HCT116 (cell line): ENCODE measurements at regions of chr12 and their contacts with region 1.

Region 1: DNA sequence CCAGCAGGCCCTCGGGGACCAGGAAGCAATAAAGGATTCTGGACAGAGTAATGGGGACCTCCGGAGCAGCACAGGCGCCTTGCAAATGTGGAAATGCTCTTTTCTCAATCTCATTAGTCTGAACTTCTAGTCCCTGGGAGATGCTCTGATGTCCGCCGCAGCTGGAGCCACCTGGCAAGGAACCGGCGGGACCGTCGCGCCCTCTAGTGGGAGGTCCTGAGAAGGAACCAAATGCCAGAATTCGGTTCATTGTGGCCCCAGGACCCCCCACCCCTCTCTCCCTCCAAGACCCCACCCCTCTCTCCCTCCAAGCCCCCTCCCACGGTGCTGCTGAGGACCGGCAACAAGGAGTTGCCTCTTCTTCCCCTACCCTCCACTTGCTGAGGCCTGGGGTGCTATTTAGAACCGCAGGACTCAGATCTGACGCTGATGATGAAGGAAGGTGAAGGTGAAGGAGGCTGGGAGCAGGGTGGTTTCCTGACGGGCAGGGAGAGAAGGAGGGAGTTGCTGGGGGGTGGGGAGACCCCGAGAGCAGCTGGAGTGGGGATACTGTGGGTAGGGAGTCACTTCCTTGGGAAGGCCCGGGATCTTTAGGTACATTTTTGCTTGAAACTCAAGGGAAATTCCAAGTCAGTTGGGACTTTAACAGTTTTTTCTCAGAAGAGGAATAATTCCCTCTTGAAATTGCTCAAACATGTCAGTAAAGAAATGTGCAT is 42.5 kb downstream of the SMIM41 start:
- DNase-seq: no peak
- ATAC-seq: peak; percentile 58
- H3K4me3 ChIP-seq: no peak overlapping the region
- H3K27ac ChIP-seq: no peak overlapping the region
- H3K4me1 ChIP-seq: peaks cover 0 to 18% of the 10 kb centered on the region in 2 experiments; a peak in 2 of 4 replicates
- H3K27me3 ChIP-seq: no peaks in the 10 kb centered on the region
- CTCF ChIP-seq: peak; percentile 70 to 83 (median 80)
- POLR2A ChIP-seq: no peak
- RAD21 ChIP-seq: peak; percentile 72

Region 2: GRCh38 chr12:52004042-52004648 is 117.8 kb before region 1 on chr12:
- CTCF ChIA-PET with region 1: interaction called, 11 read pairs
- POLR2A ChIA-PET with region 1: no interaction called
- RAD21 ChIA-PET with region 1: no interaction called
- intact Hi-C with region 1: loop called (anchors 1 kb)
- DNase-seq: no peak
- ATAC-seq: peak; percentile 83
- H3K4me3 ChIP-seq: no peak overlapping the region
- H3K27ac ChIP-seq: no peak overlapping the region
- H3K4me1 ChIP-seq: peaks cover 0 to 7% of the 10 kb centered on the region in 2 experiments; a peak in 2 of 4 replicates
- H3K27me3 ChIP-seq: no peaks in the 10 kb centered on the region
- CTCF ChIP-seq: peak; percentile 79 to 94 (median 82)
- POLR2A ChIP-seq: no peak
- RAD21 ChIP-seq: peak; percentile 94

Region 3: DNA sequence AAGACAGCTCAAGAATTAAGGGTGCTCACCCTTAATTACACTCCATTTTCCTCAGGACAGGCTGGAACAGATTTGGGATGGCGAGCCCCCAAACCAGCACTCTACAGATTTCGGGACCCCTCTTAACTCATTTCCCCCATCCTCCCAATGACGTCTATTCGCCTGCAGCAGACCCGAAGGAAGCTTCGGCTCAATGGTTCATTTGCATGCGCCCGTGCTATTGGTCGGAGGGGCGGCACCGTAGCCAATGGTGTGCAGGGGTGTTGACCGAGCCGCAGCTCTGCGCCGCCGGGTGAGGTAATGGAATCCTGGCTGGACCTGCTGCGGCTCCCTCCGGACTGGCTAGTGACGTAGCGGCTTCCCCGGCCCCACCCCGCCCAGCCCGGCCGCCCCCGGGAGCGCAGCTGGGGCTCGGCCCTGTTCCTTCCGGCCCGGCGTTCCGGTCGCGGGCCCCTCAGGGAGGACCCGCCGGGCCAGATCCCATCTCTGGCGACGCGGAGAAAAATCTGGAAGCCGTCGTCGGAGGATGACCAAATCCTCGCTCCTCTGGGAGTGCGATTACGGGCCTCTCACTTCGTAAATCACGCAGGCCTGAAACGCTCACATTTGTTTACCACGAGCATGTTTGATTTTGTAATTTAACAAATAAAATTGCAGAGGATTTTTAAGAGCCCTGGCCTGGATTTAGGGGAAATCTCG is 89.0 kb before region 1 on chr12:
- CTCF ChIA-PET with region 1: interaction called, 174 read pairs
- POLR2A ChIA-PET with region 1: interaction called, 5 read pairs
- RAD21 ChIA-PET with region 1: interaction called in 1 of 2 experiments, 3 read pairs
- intact Hi-C with region 1: no loop called
- DNase-seq: peak; percentile 89
- ATAC-seq: peak; percentile 94
- H3K4me3 ChIP-seq: peak overlapping the region; percentile 29 to 47
- H3K27ac ChIP-seq: no peak overlapping the region
- H3K4me1 ChIP-seq: peaks cover 28 to 50% of the 10 kb centered on the region in 2 experiments
- H3K27me3 ChIP-seq: no peaks in the 10 kb centered on the region
- CTCF ChIP-seq: no peak
- POLR2A ChIP-seq: no peak
- RAD21 ChIP-seq: no peak